Spleen (tissue), 13 donors: ENCODE measurements at regions of chr2 and their contacts with region 1.

Region 1: DNA sequence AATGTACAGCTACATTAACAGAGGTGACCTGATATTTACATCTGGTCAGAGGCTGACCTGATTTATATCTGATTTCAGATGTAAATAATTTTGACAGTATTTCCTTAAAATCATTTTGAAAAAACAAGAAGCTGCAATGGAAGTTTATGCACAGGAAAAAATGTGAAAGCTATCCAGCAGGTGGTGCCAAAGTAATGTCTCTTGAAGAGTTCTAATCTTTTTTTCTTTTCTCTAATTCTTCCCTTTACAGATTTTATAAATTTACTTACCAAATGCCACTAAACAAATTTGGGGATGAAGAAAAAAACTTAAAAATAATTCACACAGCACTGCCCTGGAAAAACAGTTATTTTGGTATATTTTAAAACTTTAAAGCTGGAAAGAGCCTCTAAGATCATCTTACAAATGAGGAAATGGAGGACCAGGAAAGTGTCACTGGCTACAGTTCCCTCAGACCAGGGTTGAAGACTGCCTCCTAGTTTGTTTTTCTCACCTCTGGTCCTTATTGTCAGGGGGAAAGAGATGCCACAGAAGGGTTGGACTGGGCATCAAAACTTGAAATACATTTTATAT is 16.4 kb upstream of the FBLN7 start:
- DNase-seq: no peak
- H3K4me3 ChIP-seq: no peak overlapping the region
- H3K27ac ChIP-seq: no peak overlapping the region
- H3K4me1 ChIP-seq: no peaks in the 10 kb centered on the region
- H3K27me3 ChIP-seq: no peaks in the 10 kb centered on the region
- CTCF ChIP-seq: peak; percentile 44 to 71 (median 60)
- POLR2A ChIP-seq: no peak

Region 2: DNA sequence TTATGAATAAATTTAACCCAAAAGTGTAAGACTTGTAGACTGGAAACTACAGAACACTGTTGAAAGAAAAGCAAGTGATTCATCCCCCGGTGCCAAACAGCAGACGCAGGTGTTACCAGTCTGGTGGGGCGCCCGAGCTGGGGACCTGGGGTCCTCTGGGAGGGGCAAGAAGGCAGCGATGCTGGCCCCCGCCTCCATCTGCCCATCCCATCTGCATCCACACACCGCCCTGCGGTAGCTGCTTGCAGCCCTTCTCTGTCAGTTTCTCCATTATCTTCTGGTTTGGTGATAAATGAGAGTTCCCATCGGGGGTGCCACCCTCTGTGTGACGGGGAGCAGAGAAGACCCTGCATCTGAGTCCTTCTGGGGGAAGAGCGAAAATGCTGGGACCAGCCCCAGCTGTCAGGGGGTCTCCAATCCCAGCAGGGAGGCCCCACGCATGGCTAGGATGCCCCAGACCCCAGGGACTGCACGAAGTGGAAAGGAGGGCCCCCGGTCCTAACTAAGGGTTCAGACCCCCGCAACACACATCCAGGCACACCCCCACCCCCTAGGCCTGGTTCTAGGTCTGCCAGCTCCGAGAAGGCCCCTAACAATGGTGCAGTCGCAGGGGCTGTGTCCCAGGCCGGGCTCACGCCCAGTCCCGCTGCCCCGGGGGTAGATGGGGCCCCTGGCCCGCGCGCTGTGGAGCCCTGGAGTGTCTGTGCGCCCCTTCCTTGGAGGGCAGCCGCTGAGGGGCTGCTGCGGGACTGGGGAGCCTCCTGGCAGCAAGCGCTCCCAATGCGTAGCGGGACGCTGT is 312.4 kb after region 1 on chr2:
- intact Hi-C with region 1: loop called (anchors 10 kb)
- DNase-seq: peak; percentile 81
- H3K4me3 ChIP-seq: no peak overlapping the region
- H3K27ac ChIP-seq: no peak overlapping the region
- H3K4me1 ChIP-seq: peaks cover 0 to 24% (median 12%) of the 10 kb centered on the region in 6 donors
- H3K27me3 ChIP-seq: peaks cover 0 to 10% (median 0%) of the 10 kb centered on the region in 7 donors
- CTCF ChIP-seq: no peak
- POLR2A ChIP-seq: no peak